Aorta (tissue), 5 donors: ENCODE measurements at regions of chr1 and their contacts with region 1.

Region 1: DNA sequence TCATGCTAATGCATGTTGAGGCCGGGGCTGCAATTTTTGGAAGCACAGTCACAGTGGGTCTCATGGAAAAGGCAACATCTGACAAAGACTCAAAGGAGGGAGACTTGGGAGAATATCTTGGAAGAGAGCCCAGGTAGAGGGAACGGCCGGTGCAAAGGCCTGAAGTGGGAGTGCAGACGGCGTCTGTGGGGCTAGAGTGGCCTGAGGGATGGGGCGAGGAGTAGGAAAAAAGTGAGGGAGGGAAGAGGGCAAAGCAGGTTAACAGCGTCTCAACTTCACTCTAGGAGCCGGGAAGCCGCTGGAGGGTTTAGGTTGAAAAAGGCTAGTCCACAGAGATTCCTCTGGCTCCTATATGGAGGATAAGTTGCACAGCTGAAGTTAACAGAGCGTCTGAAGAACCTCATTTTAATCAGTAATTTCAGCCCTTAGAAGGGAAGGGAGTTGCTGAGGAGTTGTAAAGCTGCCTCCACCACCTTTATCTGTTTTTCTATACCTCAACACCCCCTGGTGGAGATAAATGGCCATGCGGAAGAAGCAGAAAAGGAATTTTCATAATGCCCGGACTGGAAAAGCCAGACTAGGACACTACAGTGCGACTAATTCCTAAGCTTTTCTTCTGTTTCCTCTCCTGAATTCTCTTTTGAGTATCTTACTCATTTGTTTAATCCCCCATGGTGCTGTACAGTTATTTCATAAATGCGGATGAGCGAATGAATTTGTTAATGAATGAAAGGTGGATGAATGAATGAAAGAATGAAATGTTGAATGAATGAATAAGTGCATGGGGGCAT is 78.7 kb upstream of the ZNF281 start:
- DNase-seq: no peak
- ATAC-seq: no peak
- H3K4me3 ChIP-seq: no peak overlapping the region
- H3K27ac ChIP-seq: no peak overlapping the region
- H3K4me1 ChIP-seq: no peaks in the 10 kb centered on the region
- H3K27me3 ChIP-seq: no peaks in the 10 kb centered on the region

Region 2: DNA sequence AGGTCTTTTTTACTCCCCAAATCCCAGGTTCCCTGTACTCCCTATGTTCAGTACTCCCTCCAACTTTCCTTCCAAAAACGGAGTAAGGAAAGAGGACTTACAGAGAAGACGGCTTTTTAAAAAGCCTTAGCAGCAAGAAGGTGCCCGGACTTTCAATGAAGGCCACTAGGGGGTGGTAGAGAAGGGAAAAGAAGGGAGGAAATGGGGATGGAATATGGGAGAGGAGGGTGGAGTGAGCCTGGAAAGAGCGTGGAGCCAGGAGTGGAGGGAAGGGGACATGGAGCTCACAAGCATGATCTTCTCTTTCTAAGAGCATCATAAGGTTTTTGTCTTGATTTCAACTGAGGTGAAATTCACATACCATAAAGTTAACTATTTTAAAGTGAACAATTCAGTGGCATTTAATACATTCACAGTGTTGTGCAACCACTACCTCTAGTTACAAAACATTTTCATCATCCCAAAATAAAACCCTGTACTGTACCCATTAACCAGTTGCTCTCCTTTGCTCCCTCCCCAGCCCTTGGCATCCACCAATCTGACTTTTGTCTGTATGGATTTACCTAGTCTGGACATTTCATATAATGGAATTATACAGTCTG is 208.7 kb before region 1 on chr1:
- intact Hi-C with region 1: loop called (anchors 2 to 5 kb)
- DNase-seq: peak in 1 of 2 donors; percentile 51
- ATAC-seq: peak; percentile 67
- H3K4me3 ChIP-seq: no peak overlapping the region
- H3K27ac ChIP-seq: no peak overlapping the region
- H3K4me1 ChIP-seq: no peaks in the 10 kb centered on the region
- H3K27me3 ChIP-seq: peaks cover 0 to 2% of the 10 kb centered on the region in 2 donors